ENCODE measurements at regions of chr1 and their contacts with region 1.

Region 1: DNA sequence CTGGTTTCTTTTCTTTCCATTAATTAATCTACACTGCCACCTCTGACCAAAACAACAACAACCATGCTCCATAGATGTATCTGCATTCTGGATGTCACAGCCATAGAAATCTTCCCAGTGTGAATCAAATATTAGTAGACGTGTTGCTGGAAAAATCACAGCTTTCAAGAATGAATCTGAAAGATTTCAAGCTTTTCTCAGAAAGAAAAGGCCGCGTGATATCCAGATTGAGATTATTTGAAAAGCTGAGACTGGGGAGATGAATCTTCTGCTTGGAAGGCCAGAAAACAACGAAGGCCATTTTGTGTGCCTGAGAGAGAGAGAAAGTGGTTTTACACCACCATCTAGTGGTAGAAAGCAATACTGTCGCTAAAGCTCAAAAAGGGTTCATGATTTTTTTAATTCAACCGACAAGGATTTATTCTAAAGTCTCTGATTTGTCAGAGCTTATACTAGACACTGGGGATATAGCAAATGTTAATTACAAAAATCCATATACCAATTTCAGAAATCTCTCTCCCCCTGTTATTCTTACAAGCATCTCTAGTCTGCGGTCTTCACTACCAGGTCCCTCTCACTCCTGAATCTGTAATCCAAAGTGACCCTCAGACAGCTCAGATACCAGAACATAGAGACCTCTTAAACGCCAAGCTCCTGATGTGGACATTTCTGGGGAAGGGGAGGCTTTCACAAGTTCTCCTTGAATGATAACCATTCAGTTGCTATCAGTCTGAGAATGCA is 87.5 kb upstream of the SGIP1 start:
- DNase-seq: peak; percentile 89
- H3K4me3 ChIP-seq: no peak overlapping the region
- H3K27ac ChIP-seq: peak overlapping the region; percentile 47
- H3K4me1 ChIP-seq: peaks cover 13% of the 10 kb centered on the region
- H3K27me3 ChIP-seq: no peaks in the 10 kb centered on the region
- CTCF ChIP-seq: peak; percentile 51 to 65
- POLR2A ChIP-seq: no peak

Region 2: DNA sequence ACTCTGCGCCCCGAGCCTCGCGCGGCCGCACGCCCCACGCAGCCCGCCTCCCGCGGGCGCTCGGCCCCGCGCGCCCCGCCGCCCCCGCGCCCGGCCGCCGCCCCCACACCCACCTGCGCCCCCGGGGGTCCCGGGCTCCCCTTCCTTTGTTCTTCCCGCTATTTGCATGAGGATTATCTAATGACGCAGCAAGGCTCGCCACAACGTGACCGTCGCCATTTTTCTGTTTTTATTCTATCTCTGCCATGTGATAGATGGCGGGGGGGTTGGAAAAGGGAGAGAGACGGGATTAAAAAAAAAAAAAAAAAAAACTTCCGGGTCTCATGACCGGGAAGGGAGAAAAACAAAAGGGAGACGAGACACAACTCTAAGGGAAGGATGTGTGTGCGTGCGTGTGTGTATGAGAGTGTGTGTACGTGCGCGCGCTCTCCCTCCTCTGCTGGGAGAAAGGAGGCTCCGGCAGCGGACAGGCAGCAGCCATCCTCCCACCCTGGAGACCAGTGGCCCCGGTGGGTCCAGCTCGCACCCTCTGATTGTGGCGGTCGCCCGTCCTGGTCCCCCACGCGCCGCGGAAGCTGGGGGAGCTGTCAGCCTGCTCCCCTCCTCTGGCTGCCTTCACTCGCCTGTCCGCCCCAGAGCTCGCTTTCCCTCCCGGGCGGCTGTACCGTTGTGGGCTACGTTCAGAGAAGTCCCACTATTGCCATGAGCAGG is 1378.8 kb before region 1 on chr1:
- CTCF ChIA-PET with region 1: no interaction called
- POLR2A ChIA-PET with region 1: no interaction called
- dilution Hi-C with region 1: no loop called
- intact Hi-C with region 1: loop called (anchors 10 kb)
- DNase-seq: peak; percentile 84
- H3K4me3 ChIP-seq: peak overlapping the region; percentile 48 to 88 (median 85)
- H3K27ac ChIP-seq: peak overlapping the region; percentile 82
- H3K4me1 ChIP-seq: peaks cover 14% of the 10 kb centered on the region
- H3K27me3 ChIP-seq: no peaks in the 10 kb centered on the region
- CTCF ChIP-seq: no peak
- POLR2A ChIP-seq: no peak

Region 3: DNA sequence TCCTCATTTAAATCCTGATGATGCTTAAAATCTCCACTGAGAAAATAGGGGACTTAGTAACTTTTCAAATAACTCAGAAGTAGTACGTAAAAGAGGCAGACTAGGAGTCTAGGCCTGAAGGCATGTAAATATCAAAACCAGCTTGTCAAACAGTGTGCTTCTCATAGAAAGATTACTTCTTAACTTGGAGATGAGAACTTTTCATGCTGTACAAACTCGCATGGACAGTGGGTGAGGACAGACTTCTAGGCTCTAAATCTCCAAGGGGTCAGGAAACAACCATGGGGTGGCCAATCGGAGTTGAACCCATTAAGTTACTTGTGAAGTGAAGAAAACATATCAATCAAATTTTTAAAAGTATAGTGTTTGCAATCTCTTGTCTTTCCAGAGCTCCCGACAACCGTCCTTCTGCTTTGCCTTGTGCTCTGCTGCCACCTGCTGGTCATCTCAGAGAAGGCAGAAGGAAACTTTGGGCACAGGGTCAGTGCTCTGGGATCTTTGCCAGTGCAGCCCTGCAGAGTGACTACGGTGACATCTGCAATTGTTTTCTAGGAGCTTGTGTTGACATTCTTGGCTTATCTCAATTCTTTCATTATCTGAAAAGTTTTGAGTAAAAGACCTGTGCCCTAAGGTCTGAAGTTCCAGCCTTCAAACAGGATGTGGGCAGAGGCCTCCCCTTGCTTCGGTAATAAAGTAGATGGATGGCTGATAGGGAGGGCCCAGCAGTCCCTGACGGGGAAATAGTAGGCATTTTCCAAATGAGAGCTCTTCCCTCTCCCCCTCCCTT is 758.8 kb before region 1 on chr1:
- CTCF ChIA-PET with region 1: interaction called, 14 read pairs
- POLR2A ChIA-PET with region 1: no interaction called
- dilution Hi-C with region 1: no loop called
- intact Hi-C with region 1: loop called (anchors 1 kb)
- DNase-seq: peak; percentile 87
- H3K4me3 ChIP-seq: no peak overlapping the region
- H3K27ac ChIP-seq: no peak overlapping the region
- H3K4me1 ChIP-seq: peaks cover 15% of the 10 kb centered on the region
- H3K27me3 ChIP-seq: no peaks in the 10 kb centered on the region
- CTCF ChIP-seq: peak; percentile 72 to 86
- POLR2A ChIP-seq: no peak

Region 4: GRCh38 chr1:66253330-66253921 is 193.0 kb before region 1 on chr1:
- CTCF ChIA-PET with region 1: interaction called, 186 read pairs
- POLR2A ChIA-PET with region 1: no interaction called
- dilution Hi-C with region 1: loop called (anchors 25 kb)
- intact Hi-C with region 1: loop called (anchors 1 kb)
- DNase-seq: peak; percentile 89
- H3K4me3 ChIP-seq: no peak overlapping the region
- H3K27ac ChIP-seq: no peak overlapping the region
- H3K4me1 ChIP-seq: peaks cover 6% of the 10 kb centered on the region
- H3K27me3 ChIP-seq: no peaks in the 10 kb centered on the region
- CTCF ChIP-seq: peak; percentile 60
- POLR2A ChIP-seq: no peak

Region 5: DNA sequence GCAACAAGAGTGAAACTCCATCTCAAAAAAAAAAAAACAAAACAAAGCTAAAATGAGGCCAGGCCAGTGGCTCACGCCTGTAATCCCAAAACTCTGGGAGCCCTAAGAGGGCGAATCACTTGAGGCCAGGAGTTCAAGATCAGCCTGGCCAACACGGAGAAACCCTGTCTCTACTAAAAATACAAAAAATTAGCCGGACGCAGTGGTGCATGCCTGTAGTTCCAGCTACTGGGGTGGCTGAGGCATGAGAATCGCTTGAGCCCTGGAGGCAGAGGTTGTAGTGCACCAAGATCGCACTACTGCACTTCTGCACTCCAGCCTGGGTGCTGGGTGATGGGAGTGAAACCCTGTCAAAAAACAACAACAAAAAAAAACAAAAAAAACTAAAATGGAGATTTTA is 103.7 kb before region 1 on chr1:
- CTCF ChIA-PET with region 1: interaction called, 31 read pairs
- POLR2A ChIA-PET with region 1: interaction called, 3 read pairs
- dilution Hi-C with region 1: no loop called
- intact Hi-C with region 1: no loop called
- DNase-seq: no peak
- H3K4me3 ChIP-seq: no peak overlapping the region
- H3K27ac ChIP-seq: peak overlapping the region; percentile 68
- H3K4me1 ChIP-seq: peaks cover 91% of the 10 kb centered on the region
- H3K27me3 ChIP-seq: no peaks in the 10 kb centered on the region
- CTCF ChIP-seq: no peak
- POLR2A ChIP-seq: no peak

Region 6: DNA sequence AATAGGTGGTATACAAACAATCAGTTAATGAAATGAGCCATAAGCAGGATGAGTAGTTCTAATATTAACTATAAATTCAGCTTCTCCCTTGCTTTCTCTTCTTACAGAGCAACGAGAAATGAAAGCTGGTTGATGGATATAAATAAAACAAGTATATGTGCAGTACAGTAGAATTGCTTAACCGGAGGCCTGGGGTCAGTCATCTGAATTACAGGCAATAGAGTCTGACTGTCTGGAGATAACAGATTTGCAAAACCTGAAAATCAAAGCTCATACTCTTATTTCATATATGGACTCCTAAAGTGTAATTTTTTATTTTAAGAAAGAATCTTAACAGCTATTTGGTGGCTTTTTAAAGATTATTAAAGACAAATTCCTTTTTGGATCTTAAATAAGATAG is 44.4 kb after region 1 on chr1:
- CTCF ChIA-PET with region 1: interaction called, 17 read pairs
- POLR2A ChIA-PET with region 1: no interaction called
- dilution Hi-C with region 1: no loop called
- intact Hi-C with region 1: no loop called
- DNase-seq: peak; percentile 69
- H3K4me3 ChIP-seq: peak overlapping the region in 1 of 3 experiments; percentile 17
- H3K27ac ChIP-seq: peak overlapping the region; percentile 40
- H3K4me1 ChIP-seq: peaks cover 21% of the 10 kb centered on the region
- H3K27me3 ChIP-seq: no peaks in the 10 kb centered on the region
- CTCF ChIP-seq: no peak
- POLR2A ChIP-seq: no peak

Region 7: GRCh38 chr1:66732407-66733166 is 286.2 kb after region 1 on chr1:
- CTCF ChIA-PET with region 1: interaction called, 39 read pairs
- POLR2A ChIA-PET with region 1: no interaction called
- dilution Hi-C with region 1: no loop called
- intact Hi-C with region 1: no loop called
- DNase-seq: peak; percentile 64
- H3K4me3 ChIP-seq: no peak overlapping the region
- H3K27ac ChIP-seq: peak overlapping the region; percentile 64
- H3K4me1 ChIP-seq: peaks cover 37% of the 10 kb centered on the region
- H3K27me3 ChIP-seq: no peaks in the 10 kb centered on the region
- CTCF ChIP-seq: no peak
- POLR2A ChIP-seq: no peak

Measured in endothelial cell of umbilical vein (primary cell).